ENCODE measurements at regions of chr9 and their contacts with region 1.

Region 1: GRCh38 chr9:81529556-81530195 is 159.7 kb downstream of the TLE1 start:
- DNase-seq: peak in 1 of 2 donors; percentile 28
- ATAC-seq: peak; percentile 68 to 77
- H3K4me3 ChIP-seq: no peak overlapping the region
- H3K27ac ChIP-seq: no peak overlapping the region
- H3K4me1 ChIP-seq: no peaks in the 10 kb centered on the region
- H3K27me3 ChIP-seq: no peaks in the 10 kb centered on the region
- CTCF ChIP-seq: no peak
- POLR2A ChIP-seq: no peak

Region 2: DNA sequence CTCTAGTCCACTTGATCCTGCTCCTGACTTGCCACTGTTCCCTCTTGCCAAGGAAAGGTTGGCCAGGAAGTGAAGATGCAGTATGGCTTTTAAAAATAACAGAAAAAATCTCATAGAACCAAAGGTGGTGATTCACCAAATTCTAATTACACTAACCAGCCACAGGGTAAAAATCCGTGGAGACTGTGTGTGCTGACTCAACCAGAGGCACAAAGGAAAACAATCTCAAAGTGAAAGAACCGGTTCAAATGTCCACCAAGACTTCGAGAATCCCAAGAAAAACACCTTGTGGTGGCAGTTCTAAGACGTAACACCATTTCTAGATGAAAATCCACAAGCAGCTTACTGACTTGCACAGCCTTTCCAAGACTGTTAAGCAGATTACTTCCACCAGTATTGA is 119.5 kb before region 1 on chr9:
- in situ Hi-C with region 1: no loop called
- intact Hi-C with region 1: loop called (anchors 10 kb)
- DNase-seq: no peak
- ATAC-seq: no peak
- H3K4me3 ChIP-seq: no peak overlapping the region
- H3K27ac ChIP-seq: no peak overlapping the region
- H3K4me1 ChIP-seq: peaks cover 6 to 11% of the 10 kb centered on the region in 2 donors
- H3K27me3 ChIP-seq: no peaks in the 10 kb centered on the region
- CTCF ChIP-seq: no peak
- POLR2A ChIP-seq: no peak

Region 3: DNA sequence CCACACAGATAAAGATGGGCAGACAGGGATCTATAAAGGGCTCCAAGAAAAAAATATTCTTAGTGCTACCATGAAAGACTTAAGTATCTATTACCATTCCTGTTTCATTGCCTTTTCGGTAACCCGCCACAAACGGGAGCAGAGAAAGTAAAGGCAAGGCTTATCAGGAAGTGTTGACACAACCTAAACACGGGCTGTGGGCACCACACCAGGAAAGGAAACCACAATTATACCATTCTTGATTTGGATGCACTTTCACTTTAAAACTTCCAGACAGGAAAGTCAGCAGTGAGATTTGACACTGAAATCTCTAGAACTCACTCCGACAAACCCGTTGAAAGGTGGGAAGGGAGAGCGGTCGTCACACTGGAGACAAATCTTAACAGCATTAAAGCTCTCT is 153.1 kb after region 1 on chr9:
- in situ Hi-C with region 1: loop called in 3 of 4 experiments (anchors 5 kb)
- intact Hi-C with region 1: no loop called
- DNase-seq: no peak
- ATAC-seq: no peak
- H3K4me3 ChIP-seq: peak overlapping the region; percentile 3 to 91 (median 20)
- H3K27ac ChIP-seq: peak overlapping the region in 3 of 4 donors; percentile 14 to 61 (median 52)
- H3K4me1 ChIP-seq: peaks cover 75 to 83% of the 10 kb centered on the region in 2 donors
- H3K27me3 ChIP-seq: no peaks in the 10 kb centered on the region
- CTCF ChIP-seq: no peak
- POLR2A ChIP-seq: no peak

Region 4: GRCh38 chr9:82606492-82607382 is 1077.1 kb after region 1 on chr9:
- in situ Hi-C with region 1: loop called in 2 of 4 experiments (anchors 10 to 25 kb)
- intact Hi-C with region 1: loop called (anchors 5 kb)
- DNase-seq: peak in 1 of 2 donors; percentile 16
- ATAC-seq: peak; percentile 78 to 90
- H3K4me3 ChIP-seq: no peak overlapping the region
- H3K27ac ChIP-seq: no peak overlapping the region
- H3K4me1 ChIP-seq: peaks cover 0 to 11% of the 10 kb centered on the region in 2 donors
- H3K27me3 ChIP-seq: no peaks in the 10 kb centered on the region
- CTCF ChIP-seq: peak; percentile 22 to 72 (median 63)
- POLR2A ChIP-seq: no peak

Measured in gastrocnemius medialis (tissue), 4 donors.